ENCODE measurements at regions of chr3 and their contacts with region 1.

Region 1: DNA sequence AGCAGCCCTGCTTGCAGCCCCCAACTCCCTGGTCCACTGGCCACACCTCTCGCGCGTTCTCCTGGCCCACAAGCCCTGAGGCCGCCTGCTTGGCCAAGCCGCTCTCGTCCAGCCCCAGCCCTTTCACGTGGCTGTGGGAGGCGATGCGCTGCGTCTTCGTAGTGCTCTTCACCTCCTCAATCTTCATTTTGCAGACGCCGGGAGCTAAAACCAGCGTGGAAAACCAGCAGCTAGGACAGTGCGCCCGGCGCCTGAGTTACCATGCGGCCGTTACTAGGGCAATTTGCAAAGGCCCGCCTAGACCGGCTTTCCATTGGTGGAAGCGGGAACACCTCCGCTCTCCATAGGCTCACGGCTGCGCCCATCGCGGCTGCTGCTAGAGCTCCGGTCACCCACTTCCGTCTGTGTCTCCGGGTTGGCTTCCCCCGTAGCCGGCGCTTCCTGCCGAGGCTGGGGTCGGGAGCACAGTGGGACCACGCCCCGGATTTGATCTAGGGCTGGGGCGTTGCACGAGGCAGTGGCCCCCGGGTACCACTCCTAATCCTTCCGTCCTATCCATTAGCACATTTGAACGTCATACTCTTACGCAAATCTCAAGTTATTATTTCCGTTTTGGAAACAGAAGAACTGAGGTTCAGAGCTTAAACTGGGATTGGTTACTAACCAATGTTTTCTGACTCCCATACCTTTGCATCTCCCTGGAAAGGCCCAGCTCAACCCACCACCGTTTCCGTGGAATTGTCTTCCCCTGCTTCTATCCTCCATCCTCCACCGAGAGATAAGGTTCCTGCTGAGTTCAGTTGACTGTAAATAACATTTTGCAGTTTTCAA is at the start of gene RUVBL1:
- DNase-seq: peak; percentile 99
- H3K4me3 Mint-ChIP-seq: peak within 1 kb of the TSS; percentile 99
- H3K27ac Mint-ChIP-seq: peak within 1 kb of the TSS; percentile 97
- H3K4me1 Mint-ChIP-seq: peaks cover 21% of the 10 kb centered on the region
- H3K27me3 Mint-ChIP-seq: peaks cover under 1% of the 10 kb centered on the region
- total RNA-seq, gene RUVBL1: 149 and 150 TPM in 2 replicates

Region 2: GRCh38 chr3:127590593-127591477 is 532.9 kb before region 1 on chr3 and contains the start of gene TPRA1:
- intact Hi-C with region 1: loop called (anchors 5 kb)
- DNase-seq: peak; percentile 95
- H3K4me3 Mint-ChIP-seq: peak within 1 kb of the TSS; percentile 93
- H3K27ac Mint-ChIP-seq: peak within 1 kb of the TSS; percentile 95
- H3K4me1 Mint-ChIP-seq: peaks cover 22% of the 10 kb centered on the region
- H3K27me3 Mint-ChIP-seq: no peaks in the 10 kb centered on the region
- total RNA-seq, gene TPRA1: 32.9 and 37.2 TPM in 2 replicates

Region 3: DNA sequence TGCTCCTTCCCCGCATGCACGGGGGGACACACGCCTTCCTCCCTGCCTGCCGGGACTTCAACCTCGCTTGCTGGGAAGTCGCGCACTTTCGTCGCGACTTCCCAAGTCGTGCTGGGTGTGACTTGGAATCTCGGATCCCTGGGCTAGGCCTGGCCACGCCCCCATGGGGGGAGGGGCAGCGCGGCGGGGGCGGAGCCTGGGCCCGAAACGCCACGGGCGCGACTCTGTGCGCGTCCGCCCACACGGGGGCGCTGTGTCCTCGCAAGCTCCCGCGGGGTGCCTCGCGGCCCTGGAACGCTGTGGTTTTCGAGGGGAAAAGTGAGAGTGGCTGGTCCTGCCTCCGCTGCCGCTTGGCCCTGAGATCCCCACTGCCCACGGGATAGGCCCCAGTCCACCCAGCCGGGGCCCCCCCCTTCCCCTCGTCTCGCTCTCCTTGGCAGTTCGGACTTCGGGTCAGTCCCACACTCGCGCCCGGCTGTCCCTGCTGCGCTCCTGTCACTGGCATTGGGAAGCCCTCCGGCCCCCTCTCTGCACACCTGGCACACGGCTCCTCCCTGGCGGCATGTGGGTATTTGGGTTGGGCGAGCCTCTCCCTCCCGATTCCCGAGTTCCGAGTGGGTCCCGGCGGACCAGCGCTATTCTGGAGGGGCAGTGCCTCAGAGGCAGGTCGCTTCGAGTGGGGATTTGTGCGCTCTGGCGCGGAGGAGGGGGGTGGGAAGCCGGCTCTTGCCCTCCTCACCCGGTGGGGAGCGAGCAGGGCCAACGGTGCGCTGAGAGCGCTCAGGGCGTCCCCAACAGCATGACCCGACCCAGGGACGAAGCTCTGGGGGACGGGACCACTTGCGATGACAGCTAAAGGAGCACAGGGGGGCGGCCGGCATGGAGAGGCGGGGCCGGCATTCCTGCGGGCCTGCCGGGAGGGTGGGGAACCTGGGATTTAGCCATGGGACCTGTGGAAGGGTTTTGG is 48.0 kb before region 1 on chr3:
- intact Hi-C with region 1: loop called (anchors 1 kb)
- DNase-seq: peak; percentile 96
- H3K4me3 Mint-ChIP-seq: peak overlapping the region; percentile 66
- H3K27ac Mint-ChIP-seq: no peak overlapping the region
- H3K4me1 Mint-ChIP-seq: peaks cover 8% of the 10 kb centered on the region
- H3K27me3 Mint-ChIP-seq: no peaks in the 10 kb centered on the region

Region 4: DNA sequence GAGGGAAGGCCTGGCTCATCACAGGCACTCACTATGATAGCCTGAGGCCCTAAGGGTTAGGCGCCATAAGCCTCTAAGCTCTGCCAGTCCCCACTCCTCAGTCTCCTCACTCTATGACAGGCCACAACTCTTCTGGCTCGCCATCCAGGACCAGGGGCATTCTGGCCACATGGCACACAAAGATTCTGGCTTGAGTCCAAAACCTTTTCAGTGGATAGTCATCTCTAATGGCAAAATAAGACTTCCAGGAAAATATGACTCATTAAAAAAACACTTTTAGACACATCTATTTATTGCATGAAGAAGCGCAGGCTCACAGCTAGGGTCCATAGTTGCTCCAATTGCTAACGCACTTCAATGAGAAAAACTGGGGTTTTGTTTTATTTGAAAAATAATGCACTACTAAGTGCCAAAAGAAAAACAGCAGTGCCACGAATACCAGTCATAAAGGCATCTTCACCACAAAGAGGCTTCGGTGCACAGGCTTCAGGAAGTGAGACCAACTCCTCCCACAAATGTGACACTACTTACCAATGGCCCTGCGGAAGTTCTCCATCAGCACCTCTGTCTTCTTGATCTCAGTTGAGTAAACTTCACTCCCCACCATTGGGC is 11.3 kb before region 1 on chr3:
- intact Hi-C with region 1: loop called (anchors 1 kb)
- DNase-seq: peak; percentile 79
- H3K4me3 Mint-ChIP-seq: peak overlapping the region; percentile 48
- H3K27ac Mint-ChIP-seq: peak overlapping the region; percentile 91
- H3K4me1 Mint-ChIP-seq: peaks cover 33% of the 10 kb centered on the region
- H3K27me3 Mint-ChIP-seq: no peaks in the 10 kb centered on the region

Region 5: GRCh38 chr3:128153156-128154041 is 29.6 kb after region 1 on chr3 and contains the start of gene EEFSEC:
- intact Hi-C with region 1: loop called (anchors 1 kb)
- DNase-seq: peak; percentile 96
- H3K4me3 Mint-ChIP-seq: peak within 1 kb of the TSS; percentile 89
- H3K27ac Mint-ChIP-seq: peak within 1 kb of the TSS; percentile 95
- H3K4me1 Mint-ChIP-seq: peaks cover 17% of the 10 kb centered on the region
- H3K27me3 Mint-ChIP-seq: no peaks in the 10 kb centered on the region
- total RNA-seq, gene EEFSEC: 19.2 and 21.3 TPM in 2 replicates

Measured in activated CD4-positive, alpha-beta T cell treated with anti-CD3 and anti-CD28 coated beads, Interleukin-2, amount 10 ng/mL, durations not matched to agents 24 days and 14 days (primary cell).